ENCODE measurements at regions of chr1 and their contacts with region 1.

Region 1: GRCh38 chr1:178501705-178502329 is 5.1 kb upstream of the CLEC20A start:
- DNase-seq: peak; percentile 92
- ATAC-seq: peak; percentile 85
- H3K4me3 Mint-ChIP-seq: no peak overlapping the region
- H3K27ac Mint-ChIP-seq: no peak overlapping the region
- H3K4me1 Mint-ChIP-seq: peaks cover 13% of the 10 kb centered on the region
- H3K27me3 Mint-ChIP-seq: no peaks in the 10 kb centered on the region
- CTCF ChIP-seq: peak; percentile 97

Region 2: GRCh38 chr1:178258536-178258935 is 243.3 kb before region 1 on chr1:
- CTCF ChIA-PET with region 1: no interaction called
- POLR2A ChIA-PET with region 1: no interaction called
- DNase-seq: no peak
- ATAC-seq: no peak
- H3K4me3 Mint-ChIP-seq: no peak overlapping the region
- H3K27ac Mint-ChIP-seq: no peak overlapping the region
- H3K4me1 Mint-ChIP-seq: peaks cover 58% of the 10 kb centered on the region
- H3K27me3 Mint-ChIP-seq: no peaks in the 10 kb centered on the region
- CTCF ChIP-seq: no peak

Region 3: DNA sequence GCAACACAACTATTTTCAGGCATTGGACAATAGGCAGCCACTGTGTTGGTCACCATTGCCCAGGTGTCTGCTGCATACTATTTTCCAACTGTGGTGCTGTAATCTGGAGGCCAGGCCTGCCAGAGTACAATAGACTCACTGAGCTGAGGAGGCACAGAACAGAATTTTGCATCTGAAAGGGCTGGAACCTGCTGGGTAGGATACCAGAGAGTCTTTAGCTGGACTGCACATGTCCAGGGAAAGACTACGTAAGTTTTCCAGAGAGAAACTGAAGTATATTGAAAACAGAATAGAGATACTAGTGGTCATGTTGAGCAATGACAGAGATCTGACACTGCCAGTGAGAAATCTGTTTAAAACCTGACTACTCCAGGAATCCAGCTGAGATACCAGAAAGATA is 207.2 kb before region 1 on chr1:
- CTCF ChIA-PET with region 1: interaction called, 42 read pairs
- POLR2A ChIA-PET with region 1: no interaction called
- DNase-seq: no peak
- ATAC-seq: peak; percentile 64
- H3K4me3 Mint-ChIP-seq: peak overlapping the region; percentile 31; the same call in 1 of the 2 replicates
- H3K27ac Mint-ChIP-seq: peak overlapping the region; percentile 47; the same call in 1 of the 2 replicates
- H3K4me1 Mint-ChIP-seq: peaks cover 37% of the 10 kb centered on the region
- H3K27me3 Mint-ChIP-seq: no peaks in the 10 kb centered on the region
- CTCF ChIP-seq: no peak

Region 4: GRCh38 chr1:178324003-178324402 is 177.8 kb before region 1 on chr1:
- CTCF ChIA-PET with region 1: interaction called, 11 read pairs
- POLR2A ChIA-PET with region 1: no interaction called
- DNase-seq: no peak
- ATAC-seq: no peak
- H3K4me3 Mint-ChIP-seq: no peak overlapping the region
- H3K27ac Mint-ChIP-seq: no peak overlapping the region
- H3K4me1 Mint-ChIP-seq: peaks cover 27% of the 10 kb centered on the region
- H3K27me3 Mint-ChIP-seq: no peaks in the 10 kb centered on the region
- CTCF ChIP-seq: no peak

Region 5: DNA sequence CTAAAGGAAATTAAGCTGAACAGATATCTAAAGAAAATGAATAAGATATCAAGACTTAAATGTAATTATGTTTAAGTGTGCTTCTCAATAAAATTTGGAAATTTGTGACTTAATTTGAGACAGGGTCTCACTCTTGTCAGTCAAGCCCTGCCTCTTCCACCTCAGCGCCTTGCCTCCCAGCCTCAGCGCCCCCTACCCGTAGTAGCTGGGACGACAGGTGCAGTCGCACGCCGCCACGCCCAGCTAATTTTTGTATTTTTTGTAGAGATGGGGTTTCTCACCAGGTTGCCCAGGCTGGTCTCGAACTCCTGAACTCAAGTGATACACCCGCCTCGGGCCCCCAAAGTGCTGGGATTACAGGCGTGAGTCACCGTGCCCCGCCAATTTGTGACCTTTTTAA is 122.0 kb before region 1 on chr1:
- CTCF ChIA-PET with region 1: interaction called, 20 read pairs
- POLR2A ChIA-PET with region 1: no interaction called
- DNase-seq: peak; percentile 80
- ATAC-seq: peak; percentile 91
- H3K4me3 Mint-ChIP-seq: no peak overlapping the region; the same call in 1 of the 2 replicates
- H3K27ac Mint-ChIP-seq: no peak overlapping the region
- H3K4me1 Mint-ChIP-seq: peaks cover 19% of the 10 kb centered on the region
- H3K27me3 Mint-ChIP-seq: no peaks in the 10 kb centered on the region
- CTCF ChIP-seq: peak; percentile 88

Region 6: GRCh38 chr1:178486100-178487069 is 15.4 kb before region 1 on chr1:
- CTCF ChIA-PET with region 1: interaction called, 34 read pairs
- POLR2A ChIA-PET with region 1: no interaction called
- DNase-seq: no peak
- ATAC-seq: peak; percentile 46
- H3K4me3 Mint-ChIP-seq: no peak overlapping the region
- H3K27ac Mint-ChIP-seq: no peak overlapping the region
- H3K4me1 Mint-ChIP-seq: peaks cover 7% of the 10 kb centered on the region
- H3K27me3 Mint-ChIP-seq: no peaks in the 10 kb centered on the region; the same call in 1 of the 2 replicates
- CTCF ChIP-seq: no peak

Region 7: DNA sequence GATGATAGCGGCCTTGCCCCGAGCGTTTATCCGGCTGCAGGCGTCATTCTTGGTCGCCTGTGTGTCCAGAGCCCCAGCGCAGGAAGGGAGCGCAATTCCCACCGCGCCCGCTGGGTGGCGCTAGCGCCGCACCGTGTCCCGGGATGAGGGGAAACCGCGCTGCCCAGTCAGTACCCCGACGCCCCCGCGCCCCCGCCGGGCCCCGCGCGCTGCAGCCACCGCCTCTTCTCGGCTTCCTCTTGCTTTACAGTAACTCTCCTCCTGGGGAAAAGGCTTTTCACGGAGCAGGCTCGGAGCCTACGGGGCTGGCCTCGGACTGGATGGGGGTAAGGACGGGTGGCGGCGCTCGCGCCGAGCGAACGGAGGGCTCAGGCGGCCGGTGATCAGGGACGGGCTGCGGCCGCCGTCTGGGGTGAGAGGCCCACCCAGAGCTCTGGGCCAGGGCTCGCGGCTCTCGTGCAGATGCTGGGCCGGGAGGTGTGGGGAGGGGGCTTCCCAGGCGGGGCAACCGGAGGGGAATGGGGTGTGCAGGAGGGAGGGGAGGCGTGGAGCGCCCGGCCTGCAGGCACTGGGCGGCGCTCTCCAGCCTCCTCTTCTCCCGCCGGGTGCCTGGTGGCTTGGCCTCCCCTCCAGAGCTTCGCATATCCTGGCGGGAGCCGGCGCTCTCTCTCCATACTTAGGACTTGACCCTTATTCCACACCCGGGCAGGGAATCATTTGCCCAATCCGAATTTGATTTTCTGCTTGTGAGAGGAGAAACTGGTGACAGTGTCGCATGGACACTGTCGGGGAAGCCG is 40.9 kb after region 1 on chr1:
- CTCF ChIA-PET with region 1: interaction called, 55 read pairs
- POLR2A ChIA-PET with region 1: no interaction called
- DNase-seq: peak; percentile 97
- ATAC-seq: peak; percentile 76
- H3K4me3 Mint-ChIP-seq: peak overlapping the region; percentile 87
- H3K27ac Mint-ChIP-seq: peak overlapping the region; percentile 91
- H3K4me1 Mint-ChIP-seq: peaks cover 23% of the 10 kb centered on the region
- H3K27me3 Mint-ChIP-seq: no peaks in the 10 kb centered on the region; the same call in 1 of the 2 replicates
- CTCF ChIP-seq: peak; percentile 100

Region 8: GRCh38 chr1:178629252-178630154 is 127.7 kb after region 1 on chr1:
- CTCF ChIA-PET with region 1: no interaction called
- POLR2A ChIA-PET with region 1: no interaction called
- DNase-seq: no peak
- ATAC-seq: peak; percentile 65
- H3K4me3 Mint-ChIP-seq: no peak overlapping the region
- H3K27ac Mint-ChIP-seq: peak overlapping the region; percentile 76; the same call in 1 of the 2 replicates
- H3K4me1 Mint-ChIP-seq: peaks cover 19% of the 10 kb centered on the region
- H3K27me3 Mint-ChIP-seq: no peaks in the 10 kb centered on the region
- CTCF ChIP-seq: no peak

Region 9: GRCh38 chr1:178706432-178706831 is 204.6 kb after region 1 on chr1:
- CTCF ChIA-PET with region 1: no interaction called
- POLR2A ChIA-PET with region 1: no interaction called
- DNase-seq: no peak
- ATAC-seq: no peak
- H3K4me3 Mint-ChIP-seq: no peak overlapping the region
- H3K27ac Mint-ChIP-seq: no peak overlapping the region
- H3K4me1 Mint-ChIP-seq: no peaks in the 10 kb centered on the region
- H3K27me3 Mint-ChIP-seq: no peaks in the 10 kb centered on the region
- CTCF ChIP-seq: no peak

Region 10: DNA sequence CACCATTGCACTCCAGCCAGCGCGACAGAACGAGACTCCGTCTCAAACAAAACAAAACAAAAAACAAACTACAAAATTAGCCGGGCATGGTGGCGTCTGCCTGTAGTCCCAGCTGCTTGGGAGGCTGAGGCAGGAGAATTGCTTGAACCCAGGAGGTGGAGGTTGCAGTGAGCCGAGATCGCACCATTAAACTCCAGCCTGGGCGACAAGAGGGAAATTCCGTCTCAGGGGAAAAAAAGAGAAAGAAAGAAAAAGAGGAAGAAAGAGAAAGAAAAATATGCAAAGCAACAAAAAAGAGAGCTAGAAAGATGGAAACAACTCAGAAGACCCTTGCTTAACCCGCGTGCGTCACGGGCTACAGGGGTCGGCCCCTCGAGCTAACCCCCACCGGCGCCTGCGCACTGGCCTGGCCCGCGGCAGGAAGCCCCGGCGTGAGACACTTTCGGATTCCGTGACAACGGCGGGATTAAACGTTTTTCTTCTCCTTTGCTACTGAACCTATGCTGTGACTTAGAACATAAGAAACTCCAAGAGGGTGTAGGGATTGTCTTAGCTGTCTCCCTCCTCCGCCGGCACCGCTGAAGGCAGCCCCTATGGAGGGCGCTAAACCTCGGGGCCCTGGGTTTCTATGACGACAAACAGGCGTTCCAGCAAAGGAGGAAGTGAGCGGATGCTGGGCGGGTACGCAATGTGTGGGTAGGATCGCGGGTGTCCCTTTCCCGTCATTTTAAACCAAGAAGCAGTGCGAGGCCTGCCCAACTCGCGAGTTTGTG is 863.7 kb after region 1 on chr1 and contains the start of gene AXDND1:
- CTCF ChIA-PET with region 1: no interaction called
- POLR2A ChIA-PET with region 1: no interaction called
- DNase-seq: peak; percentile 70
- ATAC-seq: peak; percentile 93
- H3K4me3 Mint-ChIP-seq: peak within 1 kb of the TSS; percentile 84
- H3K27ac Mint-ChIP-seq: peak within 1 kb of the TSS; percentile 95
- H3K4me1 Mint-ChIP-seq: peaks cover 3% of the 10 kb centered on the region; the same call in 1 of the 2 replicates
- H3K27me3 Mint-ChIP-seq: peaks cover 3% of the 10 kb centered on the region; the same call in 1 of the 2 replicates
- CTCF ChIP-seq: no peak
- total RNA-seq, gene AXDND1: 0.18 TPM in 1 of 3 replicates, not detected in the others

Measured in WTC11 (cell line).